ENCODE measurements at regions of chr16 and their contacts with region 1.

Region 1: GRCh38 chr16:89490387-89491237 is at the start of gene ANKRD11:
- DNase-seq: peak; percentile 99 to 100 (median 99)
- ATAC-seq: peak; percentile 93
- H3K4me3 ChIP-seq: peak within 1 kb of the TSS; percentile 92
- H3K4me3 Mint-ChIP-seq: peak within 1 kb of the TSS; percentile 89 to 98 (median 94)
- H3K27ac ChIP-seq: peak within 1 kb of the TSS; percentile 90
- H3K27ac Mint-ChIP-seq: peak within 1 kb of the TSS; percentile 92 to 99 (median 97)
- H3K4me1 ChIP-seq: peaks cover 44 to 48% of the 10 kb centered on the region in 2 donors
- H3K4me1 Mint-ChIP-seq: peaks cover 48 to 73% (median 53%) of the 10 kb centered on the region in 7 donors
- H3K27me3 ChIP-seq: no peaks in the 10 kb centered on the region
- H3K27me3 Mint-ChIP-seq: peaks cover 0 to 2% (median 0%) of the 10 kb centered on the region in 5 donors
- total RNA-seq, gene ANKRD11: 178 to 254 (median 240) TPM

Region 2: DNA sequence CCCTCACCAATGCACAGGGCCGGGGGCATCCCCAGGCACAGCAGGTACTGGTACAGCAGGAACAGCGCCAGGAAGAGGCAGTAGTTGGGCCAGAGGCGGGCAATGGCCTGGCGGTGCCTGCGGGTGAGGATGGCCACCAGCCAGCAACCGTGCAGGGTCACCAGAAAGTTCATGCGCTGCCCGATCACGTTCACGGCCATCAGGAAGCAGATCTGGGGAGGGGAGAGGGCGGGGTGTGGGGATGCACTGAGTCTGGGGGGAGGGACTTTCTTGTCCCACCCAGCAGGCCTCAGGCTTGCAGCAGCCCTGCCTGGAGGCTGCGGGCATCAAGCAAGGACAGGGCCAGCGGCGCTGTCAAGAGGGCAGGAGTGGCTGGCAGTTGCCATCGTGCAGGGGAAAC is 758.9 kb before region 1 on chr16:
- CTCF ChIA-PET with region 1: no interaction called
- POLR2A ChIA-PET with region 1: no interaction called
- intact Hi-C with region 1: no loop called
- DNase-seq: no peak
- ATAC-seq: no peak
- H3K4me3 ChIP-seq: no peak overlapping the region
- H3K4me3 Mint-ChIP-seq: peak overlapping the region in 1 of 10 donors; percentile 9
- H3K27ac ChIP-seq: no peak overlapping the region
- H3K27ac Mint-ChIP-seq: peak overlapping the region in 1 of 9 donors; percentile 25
- H3K4me1 ChIP-seq: no peaks in the 10 kb centered on the region
- H3K4me1 Mint-ChIP-seq: peaks cover 0 to 8% (median 0%) of the 10 kb centered on the region in 7 donors
- H3K27me3 ChIP-seq: no peaks in the 10 kb centered on the region
- H3K27me3 Mint-ChIP-seq: no peaks in the 10 kb centered on the region

Region 3: GRCh38 chr16:89052890-89053592 is 437.6 kb before region 1 on chr16:
- CTCF ChIA-PET with region 1: no interaction called
- POLR2A ChIA-PET with region 1: no interaction called
- intact Hi-C with region 1: no loop called
- DNase-seq: peak in 1 of 9 donors; percentile 20
- ATAC-seq: peak; percentile 66
- H3K4me3 ChIP-seq: no peak overlapping the region
- H3K4me3 Mint-ChIP-seq: peak overlapping the region; percentile 81 to 94 (median 88)
- H3K27ac ChIP-seq: peak overlapping the region; percentile 53
- H3K27ac Mint-ChIP-seq: peak overlapping the region in 8 of 9 donors; percentile 9 to 97 (median 86)
- H3K4me1 ChIP-seq: no peaks in the 10 kb centered on the region
- H3K4me1 Mint-ChIP-seq: peaks cover 0 to 11% (median 4%) of the 10 kb centered on the region in 7 donors
- H3K27me3 ChIP-seq: no peaks in the 10 kb centered on the region
- H3K27me3 Mint-ChIP-seq: no peaks in the 10 kb centered on the region

Region 4: DNA sequence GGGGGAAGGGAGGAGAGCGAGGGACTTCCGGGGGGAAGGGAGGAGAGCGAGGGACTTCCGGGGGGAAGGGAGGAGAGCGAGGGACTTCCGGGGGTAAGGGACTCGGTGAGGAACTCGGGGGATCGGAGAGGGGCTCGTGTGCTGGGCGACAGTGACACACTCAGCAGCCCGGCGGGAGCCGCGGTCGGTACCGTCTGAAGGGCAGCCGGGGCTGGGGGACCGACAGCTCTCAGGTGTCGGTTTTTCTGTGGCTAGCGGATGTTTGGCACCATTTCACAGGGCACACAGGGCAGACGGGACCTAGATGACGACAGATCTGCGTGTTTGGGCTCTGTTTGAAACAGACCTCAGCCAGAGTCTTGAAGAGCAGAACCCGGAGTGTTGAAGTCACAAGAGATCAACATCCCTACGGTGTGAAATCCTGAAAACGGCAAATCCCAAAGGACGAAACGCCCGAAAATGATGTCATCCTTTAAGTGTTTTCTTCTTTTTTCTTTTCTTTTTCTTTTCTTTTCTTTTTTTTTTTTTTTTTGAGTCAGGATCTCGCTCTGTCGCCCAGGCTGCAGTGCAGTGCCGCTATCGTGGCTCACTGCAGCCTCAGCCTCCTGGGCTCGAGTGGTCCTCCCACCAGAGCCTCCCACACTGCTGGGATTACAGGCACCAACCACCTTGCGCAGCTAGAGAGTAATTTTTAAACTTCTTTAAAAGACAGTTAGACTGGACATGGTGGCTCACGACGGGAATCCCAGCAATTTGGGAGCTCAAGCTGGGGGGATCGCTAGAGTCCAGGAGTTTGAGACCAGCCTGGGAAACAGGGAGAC is 249.2 kb before region 1 on chr16:
- CTCF ChIA-PET with region 1: no interaction called
- POLR2A ChIA-PET with region 1: interaction called, 3 read pairs
- intact Hi-C with region 1: loop called (anchors 1 to 5 kb)
- DNase-seq: peak; percentile 75 to 95 (median 93)
- ATAC-seq: peak; percentile 86
- H3K4me3 ChIP-seq: peak overlapping the region; percentile 68
- H3K4me3 Mint-ChIP-seq: peak overlapping the region; percentile 83 to 100 (median 96)
- H3K27ac ChIP-seq: peak overlapping the region; percentile 91
- H3K27ac Mint-ChIP-seq: peak overlapping the region; percentile 94 to 100 (median 99)
- H3K4me1 ChIP-seq: peaks cover 5 to 6% of the 10 kb centered on the region in 2 donors
- H3K4me1 Mint-ChIP-seq: peaks cover 0 to 31% (median 18%) of the 10 kb centered on the region in 7 donors
- H3K27me3 ChIP-seq: no peaks in the 10 kb centered on the region
- H3K27me3 Mint-ChIP-seq: no peaks in the 10 kb centered on the region

Region 5: DNA sequence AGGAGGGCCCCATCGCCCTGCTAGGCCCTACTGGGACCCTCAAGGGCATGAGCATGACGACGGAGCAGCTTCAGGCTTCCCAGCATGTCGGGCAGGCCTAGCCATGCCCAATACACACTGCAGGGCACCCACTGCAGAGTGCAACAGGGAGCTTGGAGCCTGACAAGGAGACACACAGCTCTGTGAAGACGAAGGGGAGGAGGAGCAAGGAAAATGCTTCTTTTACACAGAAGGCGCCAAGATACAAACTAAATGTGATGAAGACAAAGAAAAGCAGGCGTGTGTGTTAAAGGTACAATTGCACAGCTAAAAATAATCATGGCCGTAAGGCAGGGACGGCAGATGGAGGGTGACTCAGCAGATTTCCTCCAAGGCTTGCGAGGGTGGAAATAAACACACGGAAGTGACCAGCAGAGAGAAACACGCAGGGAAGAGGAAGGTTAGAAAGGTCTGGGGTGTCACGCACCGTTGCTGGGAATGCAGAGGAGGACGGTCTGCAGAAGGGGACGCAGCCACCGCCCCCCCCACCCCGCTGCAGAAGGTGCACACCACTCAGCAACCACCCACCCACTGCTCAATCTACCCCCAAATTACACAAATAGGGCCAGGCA is 164.6 kb before region 1 on chr16:
- CTCF ChIA-PET with region 1: no interaction called
- POLR2A ChIA-PET with region 1: interaction called, 3 read pairs
- intact Hi-C with region 1: loop called in 1 of 2 experiments (anchors 5 kb)
- DNase-seq: no peak
- ATAC-seq: peak; percentile 60
- H3K4me3 ChIP-seq: no peak overlapping the region
- H3K4me3 Mint-ChIP-seq: peak overlapping the region; percentile 34 to 71 (median 47)
- H3K27ac ChIP-seq: peak overlapping the region; percentile 9
- H3K27ac Mint-ChIP-seq: peak overlapping the region; percentile 41 to 88 (median 81)
- H3K4me1 ChIP-seq: peaks cover 54 to 80% of the 10 kb centered on the region in 2 donors
- H3K4me1 Mint-ChIP-seq: peaks cover 53 to 93% (median 82%) of the 10 kb centered on the region in 7 donors
- H3K27me3 ChIP-seq: no peaks in the 10 kb centered on the region
- H3K27me3 Mint-ChIP-seq: no peaks in the 10 kb centered on the region

Region 6: GRCh38 chr16:89363621-89364393 is 126.8 kb before region 1 on chr16:
- CTCF ChIA-PET with region 1: no interaction called
- POLR2A ChIA-PET with region 1: interaction called, 6 read pairs
- intact Hi-C with region 1: loop called (anchors 1 kb)
- DNase-seq: peak in 2 of 9 donors; percentile 12 to 59
- ATAC-seq: no peak
- H3K4me3 ChIP-seq: no peak overlapping the region
- H3K4me3 Mint-ChIP-seq: peak overlapping the region; percentile 10 to 73 (median 62)
- H3K27ac ChIP-seq: peak overlapping the region; percentile 23
- H3K27ac Mint-ChIP-seq: peak overlapping the region; percentile 13 to 90 (median 77)
- H3K4me1 ChIP-seq: peaks cover 56 to 75% of the 10 kb centered on the region in 2 donors
- H3K4me1 Mint-ChIP-seq: peaks cover 65 to 99% (median 87%) of the 10 kb centered on the region in 7 donors
- H3K27me3 ChIP-seq: no peaks in the 10 kb centered on the region
- H3K27me3 Mint-ChIP-seq: no peaks in the 10 kb centered on the region

Region 7: DNA sequence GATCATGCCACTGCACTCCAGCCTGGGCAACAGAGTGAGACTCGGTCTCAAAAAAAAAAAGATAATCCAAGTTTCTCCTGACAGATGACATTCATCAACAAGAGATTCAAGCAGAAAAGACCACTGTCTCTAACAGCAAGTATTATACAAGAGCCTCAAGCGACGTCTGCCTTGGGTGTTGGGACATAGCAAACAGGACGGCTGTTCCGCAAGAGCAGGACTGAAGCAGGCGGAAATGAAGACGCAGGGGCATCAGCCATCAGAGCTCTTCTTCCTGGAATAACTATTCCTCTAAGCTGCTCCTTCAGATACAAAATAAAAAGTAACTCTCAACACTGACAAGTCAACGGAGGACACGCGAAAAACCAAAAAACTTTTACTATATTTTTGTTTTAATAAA is 54.2 kb before region 1 on chr16:
- CTCF ChIA-PET with region 1: no interaction called
- POLR2A ChIA-PET with region 1: interaction called, 4 read pairs
- intact Hi-C with region 1: loop called (anchors 1 to 5 kb)
- DNase-seq: no peak
- ATAC-seq: no peak
- H3K4me3 ChIP-seq: peak overlapping the region; percentile 36
- H3K4me3 Mint-ChIP-seq: peak overlapping the region in 7 of 10 donors; percentile 24 to 93 (median 83)
- H3K27ac ChIP-seq: peak overlapping the region; percentile 43
- H3K27ac Mint-ChIP-seq: peak overlapping the region in 7 of 9 donors; percentile 82 to 95 (median 93)
- H3K4me1 ChIP-seq: peaks cover 74 to 96% of the 10 kb centered on the region in 2 donors
- H3K4me1 Mint-ChIP-seq: peaks cover 0 to 67% (median 28%) of the 10 kb centered on the region in 7 donors
- H3K27me3 ChIP-seq: no peaks in the 10 kb centered on the region
- H3K27me3 Mint-ChIP-seq: no peaks in the 10 kb centered on the region

Region 8: DNA sequence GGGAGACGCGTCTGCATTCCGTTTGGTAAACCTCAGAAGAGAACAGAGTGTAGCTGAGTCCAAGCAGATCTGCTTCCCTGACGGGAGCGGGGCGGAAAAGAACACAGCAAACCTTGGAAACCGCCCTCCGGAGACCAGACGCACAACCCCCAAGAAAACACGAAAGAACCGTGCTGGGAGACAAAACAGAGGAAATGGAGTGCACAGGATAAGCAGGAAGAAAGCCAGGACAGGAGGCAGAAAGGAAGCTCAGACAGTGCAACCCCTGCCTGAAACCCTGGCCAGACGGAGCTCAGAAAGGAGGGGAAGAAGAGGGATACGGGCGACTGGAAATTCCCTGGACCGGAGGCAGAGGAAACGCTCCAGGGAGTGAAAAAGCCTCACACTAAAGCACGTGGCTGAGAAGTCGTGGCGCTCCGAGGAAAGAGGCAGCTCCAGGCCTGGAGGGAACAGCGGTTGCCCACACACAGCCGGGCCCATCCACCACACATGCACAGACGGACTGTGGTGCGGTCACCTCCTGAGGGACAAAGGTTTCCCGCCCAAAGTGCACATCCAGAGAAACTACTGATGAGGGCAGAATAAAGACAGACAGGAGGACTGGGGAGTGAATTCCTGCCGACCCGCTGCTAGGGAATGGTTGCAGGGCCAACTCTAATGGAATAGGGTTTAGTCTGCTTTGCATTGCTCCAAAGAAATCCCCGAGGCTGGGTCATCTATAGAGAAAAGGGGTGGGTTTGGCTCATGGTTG is 133.1 kb after region 1 on chr16:
- CTCF ChIA-PET with region 1: no interaction called
- POLR2A ChIA-PET with region 1: no interaction called
- intact Hi-C with region 1: no loop called
- DNase-seq: no peak
- ATAC-seq: no peak
- H3K4me3 ChIP-seq: no peak overlapping the region
- H3K4me3 Mint-ChIP-seq: no peak overlapping the region
- H3K27ac ChIP-seq: no peak overlapping the region
- H3K27ac Mint-ChIP-seq: no peak overlapping the region
- H3K4me1 ChIP-seq: no peaks in the 10 kb centered on the region
- H3K4me1 Mint-ChIP-seq: peaks cover 0 to 4% (median 0%) of the 10 kb centered on the region in 7 donors
- H3K27me3 ChIP-seq: no peaks in the 10 kb centered on the region
- H3K27me3 Mint-ChIP-seq: peaks cover 0 to 16% (median 10%) of the 10 kb centered on the region in 5 donors

Region 9: GRCh38 chr16:89922884-89923690 is 432.5 kb after region 1 on chr16 and contains the start of gene TUBB3:
- CTCF ChIA-PET with region 1: no interaction called
- POLR2A ChIA-PET with region 1: no interaction called
- intact Hi-C with region 1: no loop called
- DNase-seq: peak in 1 of 9 donors; percentile 82
- ATAC-seq: peak; percentile 31
- H3K4me3 ChIP-seq: no peak within 1 kb of the TSS
- H3K4me3 Mint-ChIP-seq: peak within 1 kb of the TSS in 8 of 10 donors; percentile 27 to 78 (median 46)
- H3K27ac ChIP-seq: no peak within 1 kb of the TSS
- H3K27ac Mint-ChIP-seq: peak within 1 kb of the TSS in 1 of 9 donors; percentile 68
- H3K4me1 ChIP-seq: peaks cover 8 to 15% of the 10 kb centered on the region in 2 donors
- H3K4me1 Mint-ChIP-seq: peaks cover 12 to 41% (median 32%) of the 10 kb centered on the region in 7 donors
- H3K27me3 ChIP-seq: peaks cover 4 to 15% of the 10 kb centered on the region in 2 donors
- H3K27me3 Mint-ChIP-seq: peaks cover 6 to 42% (median 20%) of the 10 kb centered on the region in 5 donors
- total RNA-seq, gene TUBB3: 0.48 to 2.8 TPM in 2 of 5 experiments, not detected in the others